Lower leg skin (tissue), 4 donors: ENCODE measurements at regions of chr12 and their contacts with region 1.

Region 1: GRCh38 chr12:96061864-96062453 is 26.6 kb upstream of the LTA4H start:
- DNase-seq: peak; percentile 69 to 89
- H3K4me3 ChIP-seq: no peak overlapping the region
- CTCF ChIP-seq: peak in 1 of 3 donors; percentile 62
- POLR2A ChIP-seq: no peak

Region 2: DNA sequence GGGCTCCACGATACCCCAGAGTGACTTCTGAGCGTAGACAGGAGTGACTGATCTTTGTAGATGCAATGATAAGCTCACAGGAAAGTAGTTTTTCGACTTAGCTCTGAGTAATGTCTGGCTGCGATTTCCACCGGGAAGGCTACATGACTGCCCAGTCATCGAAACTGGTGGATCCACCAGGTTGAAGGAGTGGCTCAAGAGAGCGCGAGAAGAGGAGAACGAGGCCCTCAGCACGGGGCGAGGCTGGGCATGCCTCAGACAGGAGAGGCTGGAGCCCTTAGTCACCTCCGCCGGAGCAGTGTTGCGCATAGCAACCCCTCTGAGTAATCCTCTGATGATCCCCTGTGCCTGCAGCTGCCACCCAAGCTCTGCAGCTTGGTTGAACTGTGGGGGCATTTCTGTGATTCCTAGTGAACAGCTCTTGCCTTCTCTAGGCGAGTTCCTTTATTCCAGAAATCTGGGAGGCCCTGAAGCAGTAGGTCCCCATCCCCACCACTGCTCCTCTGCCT is 157.8 kb after region 1 on chr12:
- intact Hi-C with region 1: loop called (anchors 5 kb)
- DNase-seq: no peak
- H3K4me3 ChIP-seq: no peak overlapping the region
- CTCF ChIP-seq: no peak
- POLR2A ChIP-seq: no peak

Region 3: GRCh38 chr12:96399919-96400797 is 338.2 kb after region 1 on chr12 and contains the start of gene CDK17:
- intact Hi-C with region 1: loop called (anchors 10 kb)
- DNase-seq: peak; percentile 60 to 96
- H3K4me3 ChIP-seq: peak within 1 kb of the TSS; percentile 89
- CTCF ChIP-seq: no peak
- POLR2A ChIP-seq: no peak
- total RNA-seq, gene CDK17: 27.3 to 41.9 (median 30.8) TPM

Region 4: GRCh38 chr12:96516472-96517430 is 454.8 kb after region 1 on chr12:
- intact Hi-C with region 1: loop called (anchors 5 kb)
- DNase-seq: peak; percentile 72 to 95
- H3K4me3 ChIP-seq: no peak overlapping the region
- CTCF ChIP-seq: peak in 1 of 3 donors; percentile 45
- POLR2A ChIP-seq: no peak